Activated T-helper 2 cell treated with anti-CD3 and anti-CD28 coated beads, Interferon-gamma antibody, Interleukin-2, Interleukin-4, amounts not matched to agents 10 μg/mL and 5 μg/mL and 100 μg/mL, durations not matched to agents 14 hours and 24 hours and 36 hours (primary cell): ENCODE measurements at regions of chr11 and their contacts with region 1.

Region 1: DNA sequence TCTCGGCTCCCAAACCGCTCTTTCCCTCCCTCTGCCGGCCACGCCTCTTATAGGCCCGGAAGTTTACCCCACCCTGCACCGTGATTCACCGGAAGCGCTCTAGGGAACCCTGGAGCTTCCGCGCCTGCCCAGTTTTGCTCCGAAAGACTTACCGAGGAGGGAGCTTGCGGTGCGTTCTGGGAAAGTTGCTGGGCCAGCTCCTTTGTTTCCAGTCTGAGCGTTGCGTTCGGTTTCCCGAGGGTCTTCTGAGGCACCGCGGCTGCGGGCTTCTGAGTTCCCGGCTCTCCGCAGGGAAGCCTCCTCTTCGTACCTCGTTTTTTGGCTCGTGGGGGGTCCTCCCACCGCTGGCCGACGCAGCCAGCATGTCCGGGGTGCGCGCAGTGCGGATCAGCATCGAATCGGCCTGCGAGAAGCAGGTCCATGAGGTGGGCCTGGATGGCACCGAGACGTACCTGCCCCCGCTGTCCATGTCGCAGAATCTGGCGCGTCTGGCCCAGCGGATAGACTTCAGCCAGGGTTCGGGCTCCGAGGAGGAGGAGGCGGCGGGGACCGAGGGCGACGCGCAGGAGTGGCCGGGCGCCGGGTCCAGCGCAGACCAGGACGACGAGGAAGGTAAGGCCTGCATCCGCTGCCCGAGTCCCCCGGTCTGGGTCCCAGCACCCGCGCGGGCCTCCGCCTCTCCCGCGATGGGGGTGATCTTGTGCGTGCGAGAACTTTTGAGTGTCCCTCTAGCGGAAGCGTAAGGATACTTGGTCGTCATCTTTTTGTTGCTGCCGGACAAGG is at the start of gene MED17:
- DNase-seq: peak; percentile 85
- H3K4me3 Mint-ChIP-seq: peak within 1 kb of the TSS; percentile 95
- H3K27ac Mint-ChIP-seq: peak within 1 kb of the TSS; percentile 89
- H3K4me1 Mint-ChIP-seq: peaks cover 49% of the 10 kb centered on the region
- H3K27me3 Mint-ChIP-seq: no peaks in the 10 kb centered on the region
- total RNA-seq, gene MED17: 48.5 and 50.8 TPM in 2 replicates

Region 2: DNA sequence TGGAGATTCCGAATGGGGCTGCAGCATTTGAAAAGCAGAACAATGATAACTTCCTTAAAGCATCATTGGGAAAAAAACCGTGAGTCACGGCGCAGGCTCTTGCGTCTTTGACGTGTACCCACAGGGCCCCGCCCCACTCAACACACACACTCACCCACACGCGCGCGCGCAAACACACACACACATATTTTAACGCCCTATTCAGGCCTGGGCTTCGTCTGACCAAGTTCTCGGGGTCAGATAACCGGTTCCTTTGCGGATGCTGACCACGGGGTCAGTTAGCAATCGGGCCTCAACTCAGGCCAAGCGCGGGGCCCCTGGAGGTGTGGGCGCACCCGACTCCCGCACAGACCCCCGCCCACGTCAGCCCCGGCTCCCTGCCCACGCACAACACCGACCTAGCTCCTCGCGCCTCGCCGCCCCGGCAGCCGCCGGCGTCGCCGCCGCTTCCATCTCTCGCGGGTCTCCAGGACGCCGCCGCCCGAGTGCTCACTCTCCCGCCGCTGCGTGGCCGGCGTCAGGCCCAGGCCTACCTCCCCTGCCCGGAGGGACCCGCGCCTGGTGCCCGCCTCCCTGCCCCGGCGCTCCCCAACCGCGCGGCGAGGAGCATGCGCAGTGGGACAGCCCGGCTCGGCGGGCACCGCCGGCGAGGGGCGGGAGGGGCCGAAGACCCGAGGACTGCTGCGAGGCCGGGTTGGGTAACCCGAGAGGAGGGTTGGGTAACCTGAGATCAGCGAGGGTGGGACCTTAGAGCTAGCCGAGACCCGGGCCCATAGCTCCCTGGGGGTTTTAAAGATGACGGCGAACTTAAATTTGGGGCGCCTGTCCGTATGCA is 586.7 kb before region 1 on chr11 and contains the start of gene SLC36A4:
- intact Hi-C with region 1: loop called (anchors 1 kb)
- DNase-seq: peak; percentile 83
- H3K4me3 Mint-ChIP-seq: peak within 1 kb of the TSS; percentile 88
- H3K27ac Mint-ChIP-seq: peak within 1 kb of the TSS; percentile 92
- H3K4me1 Mint-ChIP-seq: peaks cover 21% of the 10 kb centered on the region
- H3K27me3 Mint-ChIP-seq: peaks cover 15% of the 10 kb centered on the region
- total RNA-seq, gene SLC36A4: 18.9 and 19.8 TPM in 2 replicates

Region 3: DNA sequence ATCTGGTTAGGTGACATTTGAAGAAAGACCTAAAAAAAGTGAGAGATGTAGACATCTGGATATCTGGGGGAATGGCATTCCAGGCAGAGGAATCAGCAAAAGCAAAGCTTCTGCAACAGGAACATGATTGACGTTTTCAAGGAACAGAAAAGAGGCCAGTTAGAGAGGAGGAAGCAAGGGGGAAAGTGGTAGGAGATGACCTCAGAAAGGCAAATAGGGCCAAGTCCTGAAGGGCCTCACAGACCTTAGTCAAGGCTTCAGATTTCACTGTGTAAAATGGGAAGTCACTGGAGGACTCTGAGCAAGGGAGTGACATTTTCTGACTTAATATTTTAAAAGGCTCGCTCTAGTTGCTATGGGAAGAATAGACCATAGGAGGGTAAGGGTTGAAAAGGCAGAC is 444.1 kb before region 1 on chr11:
- intact Hi-C with region 1: no loop called
- DNase-seq: no peak
- H3K4me3 Mint-ChIP-seq: no peak overlapping the region
- H3K27ac Mint-ChIP-seq: no peak overlapping the region
- H3K4me1 Mint-ChIP-seq: no peaks in the 10 kb centered on the region
- H3K27me3 Mint-ChIP-seq: peaks cover 6% of the 10 kb centered on the region

Region 4: GRCh38 chr11:93662177-93662575 is 122.2 kb before region 1 on chr11:
- intact Hi-C with region 1: loop called (anchors 2 kb)
- DNase-seq: no peak
- H3K4me3 Mint-ChIP-seq: peak overlapping the region; percentile 95
- H3K27ac Mint-ChIP-seq: peak overlapping the region; percentile 93
- H3K4me1 Mint-ChIP-seq: peaks cover 43% of the 10 kb centered on the region
- H3K27me3 Mint-ChIP-seq: no peaks in the 10 kb centered on the region

Region 5: DNA sequence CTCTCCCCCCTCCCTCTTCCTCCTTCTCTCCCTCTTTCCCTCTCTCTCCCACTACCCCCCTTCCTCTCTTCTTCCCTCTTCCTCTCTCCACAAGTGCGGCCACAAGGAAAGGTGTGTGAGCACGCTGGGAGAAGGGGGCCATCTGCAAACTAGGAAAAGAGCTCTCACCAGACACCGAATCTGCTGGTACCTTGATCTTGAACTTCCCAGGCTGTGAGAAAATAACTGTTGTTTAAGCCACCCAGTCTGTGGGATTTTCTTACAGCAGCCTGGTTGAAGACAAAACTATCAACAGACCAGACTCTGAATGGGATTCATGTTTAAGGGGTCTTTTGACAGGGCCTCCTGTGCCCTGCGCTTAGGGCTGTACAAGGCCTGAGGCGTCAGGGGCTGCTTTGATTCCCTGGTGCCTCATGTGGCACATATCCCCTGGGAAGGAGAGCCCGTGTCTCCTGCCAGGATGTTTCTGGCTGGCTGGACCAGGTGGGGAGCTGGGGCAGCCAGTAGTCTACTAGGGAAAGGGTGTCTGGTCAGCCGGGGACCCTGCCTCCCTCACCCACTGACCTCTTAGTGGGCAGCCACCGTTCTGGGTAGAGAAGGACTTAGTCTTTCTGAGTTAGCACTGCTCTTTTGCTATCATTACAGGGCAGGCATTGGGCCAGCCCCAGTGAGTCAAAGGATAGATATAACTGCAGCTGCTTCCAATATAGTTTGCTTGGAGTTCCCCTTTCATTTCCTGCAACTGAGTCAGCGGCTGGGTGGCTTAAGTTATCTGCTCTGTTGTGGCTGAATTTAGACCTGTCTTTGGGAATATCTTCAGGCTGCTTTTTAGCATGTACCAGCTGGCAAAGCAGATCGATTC is 350.5 kb after region 1 on chr11:
- intact Hi-C with region 1: loop called (anchors 10 kb)
- DNase-seq: no peak
- H3K4me3 Mint-ChIP-seq: no peak overlapping the region
- H3K27ac Mint-ChIP-seq: peak overlapping the region; percentile 67
- H3K4me1 Mint-ChIP-seq: peaks cover 36% of the 10 kb centered on the region
- H3K27me3 Mint-ChIP-seq: no peaks in the 10 kb centered on the region

Region 6: DNA sequence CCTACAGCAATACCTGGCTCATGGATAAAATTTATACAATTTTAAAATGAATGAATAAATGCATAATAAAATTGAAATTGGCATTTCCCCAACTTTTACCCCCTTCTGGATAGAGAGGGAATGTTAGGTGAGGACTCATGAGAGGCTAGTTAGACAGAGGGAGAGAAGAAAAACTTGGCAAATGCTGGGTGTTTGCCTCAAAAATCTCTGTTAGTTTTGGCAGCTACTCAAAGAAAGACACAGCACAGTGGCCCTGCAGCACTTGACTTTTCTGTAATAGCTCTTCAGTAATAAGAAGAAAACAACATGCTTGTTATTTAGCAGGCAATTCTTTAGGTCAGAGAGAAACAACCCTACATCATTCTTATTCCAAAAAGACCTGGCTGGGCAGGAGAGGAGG is 499.3 kb after region 1 on chr11:
- intact Hi-C with region 1: no loop called
- DNase-seq: no peak
- H3K4me3 Mint-ChIP-seq: no peak overlapping the region
- H3K27ac Mint-ChIP-seq: no peak overlapping the region
- H3K4me1 Mint-ChIP-seq: no peaks in the 10 kb centered on the region
- H3K27me3 Mint-ChIP-seq: no peaks in the 10 kb centered on the region

Region 7: DNA sequence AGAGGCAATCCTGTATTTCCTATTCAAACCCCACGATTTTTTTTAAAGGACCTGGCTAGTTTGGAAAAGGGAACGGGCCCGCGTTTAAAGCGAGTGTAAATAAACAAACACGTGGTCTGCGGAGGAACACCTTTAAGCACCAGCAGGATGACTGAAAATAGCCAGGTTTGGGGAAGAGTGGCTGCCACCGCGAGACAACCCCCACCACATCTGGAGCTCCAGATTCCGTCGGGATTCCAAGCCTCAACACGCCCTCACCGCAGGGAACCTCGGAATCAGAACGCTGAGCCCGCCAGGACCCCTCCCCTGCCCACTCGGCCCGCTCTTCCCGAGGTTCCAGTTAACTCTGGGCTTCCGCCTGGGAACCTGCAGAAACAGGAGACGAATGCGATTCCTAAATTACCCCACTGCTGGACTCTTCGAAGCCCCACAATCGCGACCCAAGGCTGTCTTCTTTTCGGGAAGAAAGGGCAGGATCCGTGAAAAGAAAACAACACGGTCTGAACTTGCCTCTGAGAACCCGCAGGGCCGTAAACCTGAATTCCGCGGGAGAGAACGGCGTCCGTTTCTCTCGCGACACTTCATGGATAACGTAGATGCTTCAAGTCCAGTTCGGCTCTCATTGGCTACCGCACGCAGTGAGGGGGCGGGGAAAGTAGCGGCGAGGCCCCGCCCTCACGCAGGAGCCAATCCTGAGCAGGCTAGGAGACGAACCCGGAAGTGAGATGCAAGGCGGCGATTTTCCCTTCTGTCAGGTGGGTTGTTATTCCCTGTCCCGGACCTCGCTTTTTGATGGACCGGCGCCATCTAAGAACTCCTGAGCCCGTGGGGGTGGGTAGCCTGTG is 709.2 kb after region 1 on chr11 and contains the starts of genes ANKRD49 and MRE11:
- intact Hi-C with region 1: loop called (anchors 10 kb)
- DNase-seq: peak; percentile 96
- H3K4me3 Mint-ChIP-seq: peak within 1 kb of the TSS; percentile 94
- H3K27ac Mint-ChIP-seq: peak within 1 kb of the TSS; percentile 92
- H3K4me1 Mint-ChIP-seq: peaks cover 23% of the 10 kb centered on the region
- H3K27me3 Mint-ChIP-seq: no peaks in the 10 kb centered on the region
- total RNA-seq, gene ANKRD49: 19.4 and 20.7 TPM in 2 replicates
- total RNA-seq, gene MRE11: 45.8 and 47.4 TPM in 2 replicates